H1 (cell line): ENCODE measurements at regions of chr22 and their contacts with region 1.

Region 1: DNA sequence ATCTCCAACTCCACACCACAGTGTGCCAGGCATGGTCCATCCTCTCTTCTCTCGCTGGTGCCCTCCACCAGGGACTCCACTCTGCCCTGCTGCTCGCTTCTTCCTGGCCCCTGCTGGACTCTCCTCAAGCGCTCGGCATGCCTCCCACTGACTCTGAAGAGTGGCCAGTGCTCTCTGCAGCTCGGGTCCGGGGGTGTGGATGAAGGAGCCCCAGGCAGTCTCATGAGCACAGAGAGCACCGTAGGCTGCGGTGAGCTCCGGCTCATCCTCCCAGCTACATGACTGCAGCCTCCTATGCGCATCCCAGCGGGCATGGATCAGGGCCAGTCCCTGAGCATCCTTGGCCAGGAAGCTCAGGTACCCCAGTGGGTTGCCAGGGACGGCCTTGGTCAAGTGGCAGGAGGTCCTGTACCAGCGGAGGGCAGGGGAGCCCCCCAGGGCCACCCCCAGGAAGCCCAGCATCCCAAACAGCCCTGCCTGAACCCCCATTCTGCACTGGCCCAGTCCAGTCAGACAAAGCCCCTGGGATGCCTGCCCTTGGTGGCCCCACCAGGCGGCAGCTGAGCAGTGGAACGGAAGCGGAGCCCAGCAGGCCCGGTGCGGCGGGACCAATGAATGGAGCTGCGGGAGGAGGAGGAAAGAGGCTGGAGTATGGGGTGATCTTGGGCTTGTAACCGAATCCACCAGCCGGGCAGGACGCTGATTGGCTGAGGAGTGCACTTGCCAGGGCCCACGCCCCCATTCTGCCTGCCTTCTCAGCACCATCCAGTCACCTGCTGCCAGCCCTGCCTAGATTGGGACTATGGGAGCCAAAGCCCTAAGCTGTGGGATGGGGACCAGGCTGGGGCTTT is at the start of gene PLA2G3:
- DNase-seq: peak; percentile 85 to 91
- H3K4me3 ChIP-seq: peak within 1 kb of the TSS; percentile 50 to 77 (median 55)
- H3K27ac ChIP-seq: peak within 1 kb of the TSS; percentile 59
- H3K4me1 ChIP-seq: peaks cover 7 to 25% (median 17%) of the 10 kb centered on the region in 4 experiments
- H3K27me3 ChIP-seq: 0 out of 7 replicates have a peak, but pooled peaks cover 0 to 3% (median 0%) of the 10 kb centered on the region in 4 experiments
- CTCF ChIP-seq: peak; percentile 30 to 33 (median 32)
- EP300 ChIP-seq: peak in 1 of 2 experiments; percentile 66; a peak in 1 of 3 replicates
- POLR2A ChIP-seq: peak in 1 of 2 experiments; percentile 81; a peak in 2 of 3 replicates
- RAD21 ChIP-seq: peak; percentile 17 to 41; a peak in 3 of 4 replicates
- total RNA-seq, gene PLA2G3: 25.9 and 26.8 TPM in 2 replicates

Region 2: GRCh38 chr22:30949934-30950660 is 190.0 kb before region 1 on chr22:
- CTCF ChIA-PET with region 1: no interaction called
- POLR2A ChIA-PET with region 1: no interaction called
- DNase-seq: no peak
- H3K4me3 ChIP-seq: no peak overlapping the region
- H3K27ac ChIP-seq: no peak overlapping the region
- H3K4me1 ChIP-seq: no peaks in the 10 kb centered on the region
- H3K27me3 ChIP-seq: no peaks in the 10 kb centered on the region
- CTCF ChIP-seq: peak in 2 of 3 experiments; percentile 1 to 18; a peak in 1 of 4 replicates
- EP300 ChIP-seq: no peak
- POLR2A ChIP-seq: no peak
- RAD21 ChIP-seq: peak; percentile 13 to 28; a peak in 2 of 4 replicates

Region 3: DNA sequence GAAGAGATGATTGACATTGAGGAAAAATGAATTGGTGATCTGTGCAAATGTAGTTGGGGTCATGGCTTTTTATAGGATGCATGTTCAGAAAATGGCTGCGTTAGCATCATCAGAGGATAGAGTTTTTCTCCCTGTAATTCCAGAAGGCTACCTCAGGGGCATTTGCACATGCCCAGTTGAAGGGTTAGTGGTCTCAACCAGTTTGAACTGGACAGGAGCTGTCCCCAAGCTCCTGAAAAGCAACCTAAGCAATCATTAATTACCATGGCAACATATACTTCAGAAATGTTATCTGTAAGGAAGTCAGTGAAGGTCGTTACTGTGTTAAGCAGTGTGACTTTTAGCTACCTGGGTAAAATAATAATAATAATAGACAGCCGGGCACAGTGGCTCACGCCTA is 141.8 kb before region 1 on chr22:
- CTCF ChIA-PET with region 1: no interaction called
- POLR2A ChIA-PET with region 1: no interaction called
- DNase-seq: no peak
- H3K4me3 ChIP-seq: no peak overlapping the region
- H3K27ac ChIP-seq: no peak overlapping the region
- H3K4me1 ChIP-seq: no peaks in the 10 kb centered on the region
- H3K27me3 ChIP-seq: no peaks in the 10 kb centered on the region
- CTCF ChIP-seq: no peak
- EP300 ChIP-seq: no peak
- POLR2A ChIP-seq: no peak
- RAD21 ChIP-seq: no peak

Region 4: GRCh38 chr22:31089160-31090100 is 50.7 kb before region 1 on chr22:
- CTCF ChIA-PET with region 1: interaction called, 25 read pairs
- POLR2A ChIA-PET with region 1: interaction called, 6 read pairs
- DNase-seq: peak in 1 of 2 experiments; percentile 67
- H3K4me3 ChIP-seq: no peak overlapping the region
- H3K27ac ChIP-seq: no peak overlapping the region
- H3K4me1 ChIP-seq: peaks cover 0 to 13% (median 4%) of the 10 kb centered on the region in 4 experiments; a peak in 5 of 7 replicates
- H3K27me3 ChIP-seq: no peaks in the 10 kb centered on the region
- CTCF ChIP-seq: peak; percentile 83 to 88 (median 83)
- EP300 ChIP-seq: no peak
- POLR2A ChIP-seq: no peak
- RAD21 ChIP-seq: peak; percentile 69 to 79